A673 (cell line): ENCODE measurements at regions of chr1 and their contacts with region 1.

Region 1: DNA sequence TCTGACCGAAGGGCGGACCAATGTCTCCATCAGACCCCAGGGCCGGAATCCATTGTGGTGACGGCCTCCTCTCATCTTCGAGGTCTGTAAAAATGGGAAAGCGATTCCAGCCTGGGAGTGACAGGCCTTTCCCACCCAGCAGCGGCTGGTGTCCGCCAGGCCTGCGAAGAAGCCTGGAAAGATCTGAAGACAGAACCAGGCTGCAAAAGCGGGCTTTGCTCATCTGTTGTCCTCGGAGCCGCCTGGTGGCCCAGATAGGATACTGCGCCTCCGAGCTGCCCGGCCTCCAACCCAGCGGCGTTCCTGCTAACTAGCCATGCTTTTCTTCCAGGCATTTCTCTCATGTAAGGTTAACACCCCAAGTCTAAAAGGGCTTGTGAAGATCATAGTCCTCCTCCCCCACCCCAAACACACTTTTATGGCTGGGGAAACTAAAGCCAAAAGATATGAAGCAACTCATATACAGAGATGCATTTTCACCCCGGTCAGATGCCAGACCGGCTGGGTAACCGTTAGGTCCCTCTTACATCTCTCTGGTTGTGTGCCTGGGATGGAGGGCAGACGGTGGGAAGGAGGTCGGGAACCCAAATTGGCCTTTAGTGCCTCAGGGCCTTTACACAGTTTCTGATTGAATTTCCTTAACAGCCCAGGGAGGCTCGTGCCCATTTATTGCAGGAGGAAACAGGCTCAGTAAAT is 1.9 kb upstream of the DHRS3 start:
- DNase-seq: peak; percentile 88
- H3K4me3 ChIP-seq: no peak overlapping the region
- H3K27ac ChIP-seq: no peak overlapping the region
- H3K4me1 ChIP-seq: peaks cover 13% of the 10 kb centered on the region
- H3K27me3 ChIP-seq: peaks cover 14% of the 10 kb centered on the region
- CTCF ChIP-seq: peak; percentile 92

Region 2: GRCh38 chr1:12124693-12125421 is 495.1 kb before region 1 on chr1:
- CTCF ChIA-PET with region 1: interaction called, 5 read pairs
- POLR2A ChIA-PET with region 1: no interaction called
- intact Hi-C with region 1: loop called (anchors 10 kb)
- DNase-seq: peak; percentile 72
- H3K4me3 ChIP-seq: no peak overlapping the region
- H3K27ac ChIP-seq: no peak overlapping the region
- H3K4me1 ChIP-seq: no peaks in the 10 kb centered on the region
- H3K27me3 ChIP-seq: no peaks in the 10 kb centered on the region
- CTCF ChIP-seq: peak; percentile 87

Region 3: GRCh38 chr1:12275369-12275768 is 344.6 kb before region 1 on chr1:
- CTCF ChIA-PET with region 1: interaction called, 4 read pairs
- POLR2A ChIA-PET with region 1: no interaction called
- intact Hi-C with region 1: loop called (anchors 10 kb)
- DNase-seq: peak; percentile 38
- H3K4me3 ChIP-seq: no peak overlapping the region
- H3K27ac ChIP-seq: no peak overlapping the region
- H3K4me1 ChIP-seq: no peaks in the 10 kb centered on the region
- H3K27me3 ChIP-seq: no peaks in the 10 kb centered on the region
- CTCF ChIP-seq: peak; percentile 80

Region 4: GRCh38 chr1:12314333-12314903 is 305.5 kb before region 1 on chr1:
- CTCF ChIA-PET with region 1: interaction called, 10 read pairs
- POLR2A ChIA-PET with region 1: no interaction called
- intact Hi-C with region 1: loop called (anchors 2 kb)
- DNase-seq: peak; percentile 46
- H3K4me3 ChIP-seq: no peak overlapping the region
- H3K27ac ChIP-seq: no peak overlapping the region
- H3K4me1 ChIP-seq: peaks cover 5% of the 10 kb centered on the region
- H3K27me3 ChIP-seq: no peaks in the 10 kb centered on the region
- CTCF ChIP-seq: peak; percentile 63

Region 5: GRCh38 chr1:12407050-12407961 is 212.6 kb before region 1 on chr1:
- CTCF ChIA-PET with region 1: interaction called, 13 read pairs
- POLR2A ChIA-PET with region 1: no interaction called
- intact Hi-C with region 1: loop called (anchors 5 kb)
- DNase-seq: peak; percentile 22
- H3K4me3 ChIP-seq: no peak overlapping the region
- H3K27ac ChIP-seq: no peak overlapping the region
- H3K4me1 ChIP-seq: no peaks in the 10 kb centered on the region
- H3K27me3 ChIP-seq: no peaks in the 10 kb centered on the region
- CTCF ChIP-seq: peak; percentile 48

Region 6: DNA sequence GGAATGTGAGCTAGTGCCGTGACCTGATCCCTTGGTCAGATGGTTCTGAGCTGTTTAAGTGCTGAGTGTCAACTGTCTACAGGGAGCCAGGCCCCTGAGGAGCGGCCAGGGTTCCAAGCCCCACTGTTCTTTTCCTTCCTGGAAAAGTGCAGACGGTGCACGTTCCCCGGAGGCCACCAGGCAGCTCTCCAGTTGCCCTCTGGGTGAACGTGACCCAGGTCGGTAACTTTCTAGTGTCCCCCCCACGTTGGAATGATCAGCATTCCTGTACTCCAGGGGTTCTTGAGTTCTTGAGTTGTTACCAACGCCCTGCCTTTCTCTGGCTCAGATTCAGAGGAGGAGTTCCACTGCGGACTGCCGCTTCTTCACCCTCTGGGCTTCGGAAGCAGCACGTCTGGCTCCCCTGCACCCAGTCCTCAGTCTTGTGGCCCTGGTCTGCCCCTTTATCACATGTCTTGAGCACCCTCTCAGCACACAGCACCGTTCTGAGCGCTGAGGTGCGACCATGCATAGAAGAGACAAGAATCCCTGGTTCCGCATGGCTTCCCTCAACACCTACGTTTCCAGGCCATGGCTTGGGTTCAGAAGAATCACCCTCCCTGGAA is 133.4 kb before region 1 on chr1:
- CTCF ChIA-PET with region 1: no interaction called
- POLR2A ChIA-PET with region 1: no interaction called
- intact Hi-C with region 1: no loop called
- DNase-seq: no peak
- H3K4me3 ChIP-seq: no peak overlapping the region
- H3K27ac ChIP-seq: no peak overlapping the region
- H3K4me1 ChIP-seq: no peaks in the 10 kb centered on the region
- H3K27me3 ChIP-seq: no peaks in the 10 kb centered on the region
- CTCF ChIP-seq: no peak